Activated CD4-positive, alpha-beta T cell treated with anti-CD3 and anti-CD28 coated beads for 36 hours (primary cell): ENCODE measurements at regions of chr5 and their contacts with region 1.

Region 1: DNA sequence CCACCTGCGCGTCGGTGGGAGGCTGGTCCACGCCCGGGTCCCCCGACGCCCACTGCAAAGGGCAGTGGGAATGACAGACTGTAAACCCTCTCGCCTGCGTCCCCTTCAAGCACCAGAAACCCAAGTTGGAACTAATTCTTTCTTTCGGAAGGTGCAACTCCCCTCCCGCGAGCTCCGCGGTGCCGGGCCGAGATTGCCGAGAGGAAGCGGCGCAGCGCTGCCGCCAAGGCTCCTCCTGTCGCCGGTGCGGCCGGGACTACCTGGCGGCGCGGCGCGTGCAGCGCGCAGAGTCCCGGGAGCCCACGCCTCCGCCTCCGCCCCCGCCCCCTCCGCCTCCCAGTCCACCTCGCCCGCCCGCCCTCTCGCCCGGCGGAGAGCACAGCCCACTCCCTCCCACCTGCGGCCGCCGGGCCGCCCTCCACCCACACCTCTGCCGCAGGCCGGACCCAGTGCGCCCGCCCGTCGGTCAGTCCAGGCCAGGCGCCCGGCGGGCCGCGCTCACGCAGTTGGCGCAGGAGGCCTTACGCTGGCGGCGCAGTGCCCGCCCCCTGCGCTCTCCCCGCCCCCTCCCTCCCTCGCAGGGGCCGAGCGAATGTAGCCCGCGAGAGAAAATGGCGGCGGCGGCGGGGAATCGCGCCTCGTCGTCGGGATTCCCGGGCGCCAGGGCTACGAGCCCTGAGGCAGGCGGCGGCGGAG is at the start of gene MAP3K1:
- DNase-seq: peak; percentile 86
- ATAC-seq: peak; percentile 57
- H3K4me3 Mint-ChIP-seq: peak within 1 kb of the TSS; percentile 76
- H3K27ac Mint-ChIP-seq: peak within 1 kb of the TSS; percentile 87
- H3K4me1 Mint-ChIP-seq: peaks cover 33% of the 10 kb centered on the region
- H3K27me3 Mint-ChIP-seq: no peaks in the 10 kb centered on the region
- total RNA-seq, gene MAP3K1: 22.3 to 22.9 TPM

Region 2: DNA sequence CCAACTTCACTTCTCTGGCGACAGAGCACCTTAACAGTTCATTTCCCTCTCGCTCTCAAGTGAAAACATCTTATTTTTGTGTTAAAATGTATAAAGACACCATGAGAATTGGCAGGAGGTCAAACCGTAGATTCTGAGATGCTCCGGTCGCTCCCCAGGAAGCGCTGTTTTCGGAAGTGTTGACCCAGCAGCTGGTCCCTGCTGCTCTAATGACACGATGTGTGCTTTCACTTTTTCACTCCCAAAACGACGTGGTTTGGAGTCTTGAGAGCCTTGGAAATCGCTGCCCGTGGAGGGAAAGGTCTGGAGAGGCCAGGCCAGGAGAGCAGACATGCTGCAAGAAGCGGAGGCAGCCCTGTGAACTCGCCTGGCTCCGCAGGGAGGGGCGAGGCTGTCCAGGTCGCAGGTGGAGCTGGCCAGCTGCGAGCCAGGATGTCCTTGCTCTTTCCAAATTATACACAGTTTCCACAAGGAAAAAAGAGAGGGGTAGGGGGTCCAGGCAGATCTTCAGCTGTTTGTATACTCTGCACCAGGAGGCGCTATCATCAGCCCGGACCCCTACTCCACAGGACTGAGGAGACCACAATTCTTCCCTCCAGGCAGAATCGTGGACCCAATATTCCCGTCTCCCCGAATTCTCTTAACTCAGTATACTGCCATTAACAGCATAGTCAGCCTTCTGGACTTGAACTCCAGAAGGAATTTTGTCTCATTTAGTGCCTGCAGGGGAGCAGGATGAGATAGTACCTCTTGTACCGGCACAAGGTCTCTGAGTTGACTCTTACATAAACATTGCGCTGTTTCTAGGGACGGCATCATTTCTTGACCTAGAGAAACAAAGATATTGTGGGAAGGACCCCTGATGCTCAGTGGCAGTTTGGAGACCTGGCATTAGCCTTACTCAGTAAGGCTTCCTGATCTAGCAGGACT is 333.4 kb before region 1 on chr5:
- CTCF ChIA-PET with region 1: no interaction called
- POLR2A ChIA-PET with region 1: no interaction called
- intact Hi-C with region 1: loop called (anchors 1 to 2 kb)
- DNase-seq: peak; percentile 41
- ATAC-seq: peak; percentile 9
- H3K4me3 Mint-ChIP-seq: peak overlapping the region; percentile 74
- H3K27ac Mint-ChIP-seq: peak overlapping the region; percentile 84
- H3K4me1 Mint-ChIP-seq: peaks cover 41% of the 10 kb centered on the region
- H3K27me3 Mint-ChIP-seq: no peaks in the 10 kb centered on the region

Region 3: GRCh38 chr5:56774957-56775356 is 40.2 kb before region 1 on chr5:
- CTCF ChIA-PET with region 1: no interaction called
- POLR2A ChIA-PET with region 1: no interaction called
- intact Hi-C with region 1: no loop called
- DNase-seq: no peak
- ATAC-seq: no peak
- H3K4me3 Mint-ChIP-seq: no peak overlapping the region
- H3K27ac Mint-ChIP-seq: no peak overlapping the region
- H3K4me1 Mint-ChIP-seq: no peaks in the 10 kb centered on the region
- H3K27me3 Mint-ChIP-seq: no peaks in the 10 kb centered on the region

Region 4: GRCh38 chr5:56827049-56827448 is 11.9 kb after region 1 on chr5:
- CTCF ChIA-PET with region 1: interaction called, 6 read pairs
- POLR2A ChIA-PET with region 1: no interaction called
- intact Hi-C with region 1: loop called (anchors 1 kb)
- DNase-seq: peak; percentile 36
- ATAC-seq: peak; percentile 17
- H3K4me3 Mint-ChIP-seq: no peak overlapping the region
- H3K27ac Mint-ChIP-seq: peak overlapping the region; percentile 85
- H3K4me1 Mint-ChIP-seq: peaks cover 94% of the 10 kb centered on the region
- H3K27me3 Mint-ChIP-seq: no peaks in the 10 kb centered on the region

Region 5: DNA sequence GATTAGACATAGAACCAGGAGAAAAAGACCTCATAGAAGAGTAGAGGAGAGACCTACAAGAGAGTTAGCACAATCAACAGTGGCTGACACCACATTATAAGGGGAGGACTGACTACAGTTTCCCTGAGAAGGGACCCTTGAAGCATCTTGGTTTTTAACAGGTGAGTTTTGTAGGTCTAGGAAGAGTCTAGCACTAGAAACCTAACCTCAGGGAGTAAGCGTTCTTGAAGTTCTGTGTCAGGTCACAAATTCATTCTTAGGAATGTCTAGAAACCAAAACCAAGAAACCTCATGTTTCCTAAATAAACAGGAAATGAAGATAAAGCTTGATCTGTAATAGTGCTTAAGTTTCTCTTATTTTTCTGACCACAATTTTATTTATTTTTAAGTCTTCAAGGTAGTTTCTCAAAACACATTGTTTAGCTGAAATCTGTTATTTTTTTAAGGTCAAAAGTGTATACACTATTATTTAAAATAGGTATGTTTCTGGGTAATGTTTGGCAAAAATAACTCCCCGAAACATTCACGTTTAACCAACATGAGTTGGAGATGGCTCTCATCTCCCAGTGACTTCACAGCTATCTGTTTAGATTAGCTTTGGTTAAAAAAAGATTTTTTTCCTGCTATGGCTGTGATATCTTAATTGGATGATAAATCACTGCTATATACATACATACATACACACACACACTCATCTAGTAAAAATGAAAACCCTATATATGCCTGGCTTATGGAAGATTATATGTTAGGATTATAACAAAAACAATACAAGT is 37.3 kb after region 1 on chr5:
- CTCF ChIA-PET with region 1: no interaction called
- POLR2A ChIA-PET with region 1: no interaction called
- intact Hi-C with region 1: loop called (anchors 2 to 5 kb)
- DNase-seq: no peak
- ATAC-seq: no peak
- H3K4me3 Mint-ChIP-seq: peak overlapping the region; percentile 11
- H3K27ac Mint-ChIP-seq: peak overlapping the region; percentile 30
- H3K4me1 Mint-ChIP-seq: peaks cover 75% of the 10 kb centered on the region
- H3K27me3 Mint-ChIP-seq: no peaks in the 10 kb centered on the region

Region 6: DNA sequence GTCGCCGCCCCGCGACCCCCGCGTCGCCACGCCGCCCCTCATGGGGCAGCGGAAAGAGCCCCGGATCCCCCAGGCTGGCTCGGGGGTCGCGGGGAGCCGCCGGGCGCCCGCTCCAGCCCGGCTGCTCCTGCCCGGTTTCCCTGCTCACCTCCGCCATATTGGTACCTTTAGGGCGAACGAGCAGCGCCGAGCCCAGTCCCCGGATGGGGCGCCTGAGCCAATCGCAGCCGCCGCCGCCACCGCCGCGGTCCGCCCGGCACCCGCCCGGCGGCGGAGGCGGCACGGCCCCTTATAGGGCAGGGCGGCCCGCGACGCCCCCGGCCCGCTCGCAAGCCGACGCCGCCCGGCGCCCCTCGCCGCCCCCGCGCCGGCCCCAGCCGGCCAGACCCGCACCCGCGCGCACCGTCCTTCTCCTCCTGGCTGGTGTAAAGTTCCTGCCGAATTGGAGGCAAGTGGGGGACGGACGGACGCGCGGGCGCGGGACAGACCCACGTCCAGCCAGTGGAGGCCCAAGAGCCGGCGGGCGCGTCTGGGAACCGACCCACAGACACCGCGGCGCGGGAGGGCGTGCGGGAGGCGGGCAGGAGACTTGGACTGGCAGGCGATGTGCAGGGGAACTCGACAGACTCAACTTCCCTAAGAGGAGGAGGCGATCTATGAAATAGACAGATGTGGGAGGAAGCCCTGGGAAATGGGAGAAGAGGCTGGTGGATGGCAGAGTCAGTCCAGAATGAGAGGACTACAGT is 137.0 kb after region 1 on chr5 and contains the start of gene MIER3:
- CTCF ChIA-PET with region 1: no interaction called
- POLR2A ChIA-PET with region 1: no interaction called
- intact Hi-C with region 1: loop called in 1 of 2 experiments (anchors 2 kb)
- DNase-seq: peak; percentile 90
- ATAC-seq: peak; percentile 95
- H3K4me3 Mint-ChIP-seq: peak within 1 kb of the TSS; percentile 85
- H3K27ac Mint-ChIP-seq: peak within 1 kb of the TSS; percentile 81
- H3K4me1 Mint-ChIP-seq: peaks cover 20% of the 10 kb centered on the region
- H3K27me3 Mint-ChIP-seq: peaks cover 16% of the 10 kb centered on the region
- total RNA-seq, gene MIER3: 15.4 to 16.0 TPM